Esophagus squamous epithelium (tissue), 5 donors: ENCODE measurements at regions of chr1 and their contacts with region 1.

Region 1: DNA sequence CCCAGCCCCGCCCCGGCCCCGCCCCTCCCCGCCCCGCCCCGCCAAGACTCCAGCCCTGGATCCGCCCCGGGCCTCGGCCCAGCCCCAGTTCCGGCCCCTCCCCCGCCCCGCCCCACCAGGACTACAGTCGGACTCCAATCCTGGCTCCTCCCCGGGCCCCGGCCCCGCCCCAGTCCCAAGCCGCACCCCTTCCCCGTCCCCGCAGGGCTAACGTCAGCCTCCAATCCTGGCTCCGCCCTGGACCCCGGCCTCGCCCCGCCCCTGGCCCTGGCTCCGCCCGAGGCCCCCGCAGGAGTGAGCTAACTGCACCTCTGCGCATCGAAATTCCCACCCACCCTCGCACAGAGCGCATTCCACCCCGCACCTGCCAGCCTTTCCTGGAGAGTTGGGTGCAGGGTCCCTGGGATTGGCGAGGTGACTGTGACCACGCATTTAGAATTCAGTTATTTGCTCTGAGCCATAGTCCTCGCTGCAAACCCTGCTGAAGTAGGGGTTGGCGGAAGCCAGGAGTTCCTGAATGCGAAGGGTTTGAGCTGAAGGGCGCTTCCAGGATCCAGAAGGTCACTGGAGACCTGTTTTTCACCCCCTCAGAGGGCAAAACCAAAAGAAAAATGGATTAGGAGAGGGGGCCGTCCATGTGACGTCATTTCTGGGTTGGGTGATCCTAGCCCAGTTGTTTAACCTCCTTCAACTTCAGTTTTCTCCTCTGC is 588 bp upstream of the IGSF8 start:
- DNase-seq: peak; percentile 97
- H3K4me3 ChIP-seq: peak overlapping the region; percentile 33 to 94 (median 85)
- H3K27ac ChIP-seq: peak overlapping the region; percentile 83 to 97 (median 94)
- H3K4me1 ChIP-seq: peaks cover 23 to 69% (median 28%) of the 10 kb centered on the region in 3 donors
- H3K27me3 ChIP-seq: no peaks in the 10 kb centered on the region
- CTCF ChIP-seq: no peak
- POLR2A ChIP-seq: peak in 1 of 4 donors; percentile 59

Region 2: GRCh38 chr1:160205242-160206035 is 106.4 kb after region 1 on chr1 and contains the start of gene PEA15:
- intact Hi-C with region 1: loop called (anchors 5 kb)
- DNase-seq: no peak
- H3K4me3 ChIP-seq: peak within 1 kb of the TSS; percentile 75 to 97 (median 95)
- H3K27ac ChIP-seq: peak within 1 kb of the TSS; percentile 95 to 97 (median 96)
- H3K4me1 ChIP-seq: peaks cover 39 to 63% (median 51%) of the 10 kb centered on the region in 3 donors
- H3K27me3 ChIP-seq: no peaks in the 10 kb centered on the region
- CTCF ChIP-seq: peak in 1 of 6 experiments; percentile 7
- POLR2A ChIP-seq: peak in 3 of 4 donors; percentile 29 to 83 (median 70)
- total RNA-seq, gene PEA15: 39.1 to 86.0 (median 69.8) TPM

Region 3: DNA sequence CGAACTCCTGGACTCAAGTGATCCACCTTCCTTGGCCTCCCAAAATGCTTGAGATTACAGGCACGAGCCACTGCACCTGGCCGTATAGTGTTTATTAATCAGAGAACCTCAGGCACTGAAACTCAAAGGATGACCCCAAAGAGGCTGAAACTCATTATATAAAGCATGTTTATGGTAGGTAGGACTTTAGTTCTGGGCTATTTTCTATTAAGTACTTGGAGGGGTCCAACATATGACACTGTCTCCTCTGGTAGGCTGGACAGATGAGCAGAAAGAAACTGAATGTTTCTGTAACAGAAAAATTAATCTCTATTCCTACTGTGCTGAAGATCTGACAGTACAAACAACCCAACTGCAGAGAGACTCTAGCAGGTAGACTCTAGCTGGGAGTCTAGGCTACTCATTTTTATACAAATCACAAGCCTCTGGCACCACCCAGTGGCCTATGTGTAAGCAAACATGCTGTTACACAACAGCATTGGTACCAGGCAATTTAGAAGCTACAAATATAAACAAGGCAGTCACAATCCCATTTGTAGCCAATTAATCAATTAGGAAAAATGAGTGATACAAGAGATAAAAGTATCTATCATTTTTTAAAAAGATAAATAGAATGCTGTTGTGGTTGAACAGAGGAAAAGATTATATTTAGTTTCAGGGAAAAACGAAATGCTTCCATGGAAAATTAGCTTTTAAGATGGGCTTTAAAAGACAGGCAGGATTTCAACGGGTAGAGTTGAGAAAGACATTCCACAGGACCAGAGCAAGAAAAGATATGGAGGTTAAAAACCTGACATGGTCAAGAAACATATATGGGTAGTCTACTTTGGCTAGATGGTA is 152.9 kb after region 1 on chr1:
- intact Hi-C with region 1: loop called (anchors 10 kb)
- DNase-seq: no peak
- H3K4me3 ChIP-seq: no peak overlapping the region
- H3K27ac ChIP-seq: peak overlapping the region in 1 of 4 donors; percentile 20
- H3K4me1 ChIP-seq: peaks cover 0 to 20% (median 4%) of the 10 kb centered on the region in 3 donors
- H3K27me3 ChIP-seq: no peaks in the 10 kb centered on the region
- CTCF ChIP-seq: peak; percentile 29 to 80 (median 69)
- POLR2A ChIP-seq: no peak

Region 4: DNA sequence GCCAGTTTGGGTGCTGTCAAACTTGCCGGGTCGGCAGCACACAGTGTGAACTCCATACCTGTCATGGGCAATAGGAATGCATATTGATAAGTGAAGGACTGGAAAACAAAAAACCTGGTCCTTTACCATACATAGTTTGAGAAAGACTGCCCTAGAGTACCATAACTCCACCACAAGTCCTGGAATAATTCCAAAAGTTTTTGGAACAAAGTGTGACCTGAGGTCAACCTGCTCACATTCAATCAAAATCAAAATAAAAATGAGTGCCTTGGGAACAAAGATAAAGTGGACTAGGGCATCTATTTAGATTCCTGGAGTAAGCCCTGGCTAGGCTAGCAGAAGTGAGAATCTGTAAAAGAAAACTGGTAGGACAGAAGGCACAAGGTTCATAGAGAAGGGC is 178.3 kb after region 1 on chr1:
- intact Hi-C with region 1: no loop called
- DNase-seq: no peak
- H3K4me3 ChIP-seq: no peak overlapping the region
- H3K27ac ChIP-seq: no peak overlapping the region
- H3K4me1 ChIP-seq: no peaks in the 10 kb centered on the region
- H3K27me3 ChIP-seq: no peaks in the 10 kb centered on the region
- CTCF ChIP-seq: no peak
- POLR2A ChIP-seq: no peak